ENCODE measurements at regions of chr21 and their contacts with region 1.

Region 1: DNA sequence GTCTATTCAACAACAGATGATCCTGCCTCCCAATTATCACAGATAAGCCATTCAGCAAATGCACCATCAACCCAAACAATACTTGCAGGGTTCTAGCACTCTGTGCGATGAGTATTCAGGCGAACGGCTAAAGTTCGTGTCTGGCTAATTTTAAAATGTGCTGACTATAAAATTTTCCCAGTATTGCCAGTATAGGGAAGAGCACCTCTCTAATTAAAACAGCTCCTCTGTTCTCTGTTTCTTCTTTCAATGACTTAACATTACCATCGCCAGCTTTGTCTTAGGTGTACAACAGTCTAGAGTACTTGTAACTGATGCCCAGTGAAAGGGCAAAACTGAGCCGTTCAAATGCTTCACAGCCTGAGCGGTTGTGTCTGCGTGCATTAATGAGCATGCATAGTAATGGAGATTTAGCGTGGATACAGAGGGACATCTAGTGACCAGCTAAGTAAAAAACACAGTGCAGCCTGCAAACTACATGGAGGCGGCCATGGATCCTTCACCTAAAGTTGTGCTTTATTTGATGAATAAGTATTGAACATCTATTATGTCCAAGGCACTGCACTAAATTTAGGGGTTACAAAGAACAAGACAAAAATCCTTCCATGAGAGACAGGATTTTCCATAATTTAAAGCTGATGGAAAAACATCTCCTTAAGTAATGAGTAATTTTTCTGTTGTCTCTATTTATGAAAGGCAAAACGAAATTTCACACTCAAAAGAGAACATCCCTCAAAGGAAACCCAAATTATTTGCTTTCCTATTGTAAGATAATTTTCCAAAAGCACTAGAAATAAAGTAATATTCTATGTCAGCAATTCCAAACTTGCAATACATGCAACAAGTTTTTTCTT is 120.0 kb downstream of the SETD4 start:
- H3K4me3 Mint-ChIP-seq: no peak overlapping the region
- H3K27ac Mint-ChIP-seq: no peak overlapping the region
- H3K4me1 Mint-ChIP-seq: no peaks in the 10 kb centered on the region
- H3K27me3 Mint-ChIP-seq: no peaks in the 10 kb centered on the region

Region 2: DNA sequence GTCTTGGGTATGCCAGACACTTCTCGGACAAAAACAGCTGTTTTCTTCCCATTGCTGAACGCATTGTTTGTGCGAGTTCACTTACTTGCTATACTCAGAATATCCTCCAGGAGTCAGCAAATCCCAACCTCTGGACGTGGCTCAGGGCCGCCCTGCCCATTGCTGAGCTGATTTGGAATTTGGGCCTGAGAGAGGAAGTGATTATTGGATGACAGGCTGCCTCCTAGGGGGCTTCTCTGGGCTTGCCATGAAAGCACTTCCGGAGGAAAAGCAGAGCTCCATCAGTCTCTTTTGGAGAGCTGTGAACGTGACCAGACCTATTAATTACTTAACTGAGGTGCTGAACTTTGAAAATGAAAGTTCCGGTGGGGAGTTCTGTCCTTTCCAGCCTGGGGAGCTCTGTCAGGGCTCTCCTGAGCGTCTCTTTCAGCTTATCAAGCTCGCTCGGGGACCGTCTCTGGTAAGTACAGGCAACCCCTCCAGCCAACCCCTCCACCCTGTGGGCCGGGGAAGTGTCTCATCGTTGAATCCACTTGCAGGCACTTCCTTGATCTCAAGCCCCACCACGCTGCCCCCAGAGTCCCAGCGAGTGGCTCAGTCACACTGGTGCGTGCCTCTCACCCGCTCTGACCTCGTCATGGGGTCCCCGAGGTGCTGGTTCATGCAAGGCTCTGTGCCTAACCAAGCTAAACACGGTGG is 1194.6 kb before region 1 on chr21:
- intact Hi-C with region 1: loop called (anchors 1 kb)
- H3K4me3 Mint-ChIP-seq: peak overlapping the region; percentile 57
- H3K27ac Mint-ChIP-seq: no peak overlapping the region
- H3K4me1 Mint-ChIP-seq: no peaks in the 10 kb centered on the region
- H3K27me3 Mint-ChIP-seq: peaks cover 26% of the 10 kb centered on the region